H1 (cell line): ENCODE measurements at regions of chr10 and their contacts with region 1.

Region 1: DNA sequence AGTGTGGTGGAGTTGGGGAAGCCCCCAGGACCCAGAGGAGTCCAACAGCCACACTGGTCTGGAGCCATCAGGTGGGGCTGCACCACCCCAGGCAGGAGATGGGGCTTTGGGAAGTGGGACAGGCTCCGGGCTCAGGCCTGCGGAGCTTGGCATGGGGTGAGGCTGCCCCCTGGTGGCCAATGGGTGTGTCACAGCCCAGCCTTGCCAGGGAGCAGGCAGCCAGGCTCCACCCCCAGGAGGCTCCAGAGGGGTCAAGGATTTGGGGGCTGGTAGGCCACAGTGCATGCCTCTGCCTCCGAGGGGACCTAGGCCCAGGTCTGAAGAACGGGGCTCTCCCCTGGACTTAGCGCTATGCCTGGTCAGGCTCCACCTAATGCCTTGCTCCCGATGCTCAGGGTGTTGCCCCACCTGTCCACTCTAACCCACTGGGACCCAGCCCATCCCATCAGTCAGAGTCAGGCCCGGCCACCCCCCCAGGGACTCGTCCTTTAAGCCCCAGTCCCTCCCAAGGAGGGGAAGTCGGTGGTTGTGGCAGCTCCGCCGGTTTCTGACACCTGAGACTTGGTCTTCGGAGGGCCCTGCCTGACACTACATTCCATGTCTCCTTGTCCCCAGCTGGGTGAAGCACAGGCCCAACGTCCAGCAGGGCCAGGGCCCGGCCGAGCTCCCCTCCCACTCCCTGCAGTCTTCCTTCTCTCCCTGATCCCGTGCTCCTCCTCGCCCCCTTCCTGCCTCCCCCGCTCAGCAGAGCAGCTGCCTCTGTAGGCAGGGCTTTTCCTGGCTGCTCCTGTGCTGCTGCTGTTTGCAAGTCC is 11.3 kb upstream of the SAMD8 start:
- DNase-seq: peak; percentile 77 to 99
- H3K4me3 ChIP-seq: peak overlapping the region in 2 of 4 experiments; percentile 10 to 25; a peak in 2 of 8 replicates
- H3K27ac ChIP-seq: peak overlapping the region; percentile 59; the same call in 1 of the 2 replicates
- H3K4me1 ChIP-seq: peaks cover 0 to 13% (median 8%) of the 10 kb centered on the region in 4 experiments; a peak in 5 of 7 replicates
- H3K27me3 ChIP-seq: no peaks in the 10 kb centered on the region
- CTCF ChIP-seq: peak; percentile 94 to 98 (median 96)
- EP300 ChIP-seq: no peak
- POLR2A ChIP-seq: peak in 1 of 2 experiments; percentile 62; a peak in 2 of 3 replicates
- RAD21 ChIP-seq: peak; percentile 98 to 99

Region 2: GRCh38 chr10:75019370-75019769 is 80.8 kb before region 1 on chr10:
- CTCF ChIA-PET with region 1: interaction called, 44 read pairs
- POLR2A ChIA-PET with region 1: no interaction called
- DNase-seq: no peak
- H3K4me3 ChIP-seq: no peak overlapping the region
- H3K27ac ChIP-seq: no peak overlapping the region
- H3K4me1 ChIP-seq: peaks cover 0 to 4% (median 2%) of the 10 kb centered on the region in 4 experiments; a peak in 1 of 7 replicates
- H3K27me3 ChIP-seq: no peaks in the 10 kb centered on the region
- CTCF ChIP-seq: no peak; a peak in 1 of 4 replicates
- EP300 ChIP-seq: no peak
- POLR2A ChIP-seq: no peak
- RAD21 ChIP-seq: peak; percentile 58 to 60

Region 3: GRCh38 chr10:75042292-75042974 is 57.7 kb before region 1 on chr10:
- CTCF ChIA-PET with region 1: interaction called, 12 read pairs
- POLR2A ChIA-PET with region 1: interaction called, 3 read pairs
- DNase-seq: no peak
- H3K4me3 ChIP-seq: no peak overlapping the region
- H3K27ac ChIP-seq: no peak overlapping the region
- H3K4me1 ChIP-seq: no peaks in the 10 kb centered on the region
- H3K27me3 ChIP-seq: no peaks in the 10 kb centered on the region
- CTCF ChIP-seq: no peak
- EP300 ChIP-seq: no peak
- POLR2A ChIP-seq: no peak
- RAD21 ChIP-seq: no peak

Region 4: GRCh38 chr10:75083972-75084833 is 16.0 kb before region 1 on chr10:
- CTCF ChIA-PET with region 1: interaction called, 37 read pairs
- POLR2A ChIA-PET with region 1: interaction called, 5 read pairs
- DNase-seq: no peak
- H3K4me3 ChIP-seq: no peak overlapping the region
- H3K27ac ChIP-seq: no peak overlapping the region
- H3K4me1 ChIP-seq: peaks cover 3 to 21% (median 10%) of the 10 kb centered on the region in 4 experiments; a peak in 6 of 7 replicates
- H3K27me3 ChIP-seq: no peaks in the 10 kb centered on the region
- CTCF ChIP-seq: no peak
- EP300 ChIP-seq: no peak
- POLR2A ChIP-seq: no peak
- RAD21 ChIP-seq: no peak

Region 5: DNA sequence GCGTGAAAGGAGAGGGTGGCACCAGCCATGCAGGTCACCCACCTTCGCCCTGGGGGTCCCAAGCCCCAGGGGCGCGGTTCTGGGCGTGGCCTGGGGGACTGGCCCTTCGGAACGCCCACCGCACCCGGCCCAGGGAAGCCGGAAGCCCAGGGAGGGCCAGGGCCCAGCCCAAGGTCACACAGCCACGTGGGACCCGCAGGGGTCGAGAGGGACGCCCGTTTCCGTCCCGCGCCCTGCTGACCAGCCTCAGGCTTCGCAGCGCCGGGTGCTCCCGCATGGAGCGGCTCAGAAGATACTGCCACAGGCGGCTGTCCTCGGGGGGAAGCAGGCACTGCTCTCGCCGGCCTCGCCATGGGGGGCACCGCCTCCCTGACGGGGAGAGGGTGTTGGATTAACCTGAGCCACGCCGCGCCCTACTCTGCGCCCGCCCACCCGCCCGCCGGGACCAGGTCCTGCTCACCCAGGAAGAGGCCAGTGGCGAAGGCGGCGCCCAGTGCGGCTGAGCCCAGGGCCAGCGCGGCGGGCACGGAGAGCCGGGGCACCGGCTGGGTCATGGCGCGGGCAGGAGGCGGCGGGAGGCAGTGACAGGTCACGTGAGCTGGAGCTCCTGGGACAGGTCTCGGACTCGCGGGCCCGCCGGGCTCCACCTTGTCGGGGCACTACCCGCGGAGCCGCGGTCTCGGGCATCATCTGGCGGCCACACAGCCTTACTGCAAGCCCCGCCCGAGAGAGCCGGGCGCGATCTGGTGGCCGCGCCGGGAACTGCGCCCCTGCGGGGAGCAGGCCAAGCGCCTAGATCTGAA is 135.4 kb after region 1 on chr10 and contains the start of gene COMTD1:
- CTCF ChIA-PET with region 1: interaction called, 13 read pairs
- POLR2A ChIA-PET with region 1: interaction called, 3 read pairs
- DNase-seq: peak; percentile 91 to 98
- H3K4me3 ChIP-seq: peak within 1 kb of the TSS; percentile 26 to 70 (median 64)
- H3K27ac ChIP-seq: no peak within 1 kb of the TSS
- H3K4me1 ChIP-seq: peaks cover 0 to 15% (median 10%) of the 10 kb centered on the region in 4 experiments; a peak in 6 of 7 replicates
- H3K27me3 ChIP-seq: no peaks in the 10 kb centered on the region
- CTCF ChIP-seq: peak; percentile 99 to 100 (median 99)
- EP300 ChIP-seq: no peak
- POLR2A ChIP-seq: 0 out of 3 replicates have a peak, but pooled peaks of 1 of the 2 experiments have one; percentile 12
- RAD21 ChIP-seq: peak; percentile 98 to 99
- total RNA-seq, gene COMTD1: 31.9 and 32.5 TPM in 2 replicates